SK-N-SH (cell line): ENCODE measurements at regions of chr6 and their contacts with region 1.

Region 1: GRCh38 chr6:79777713-79778579 is 146.8 kb downstream of the SH3BGRL2 start:
- DNase-seq: peak; percentile 92
- H3K4me3 ChIP-seq: peak overlapping the region; percentile 34 to 44
- H3K27ac ChIP-seq: peak overlapping the region in 1 of 2 experiments; percentile 51; a peak in 2 of 4 replicates
- H3K4me1 ChIP-seq: peaks cover 0 to 9% of the 10 kb centered on the region in 2 experiments; a peak in 2 of 4 replicates
- H3K27me3 ChIP-seq: no peaks in the 10 kb centered on the region
- CTCF ChIP-seq: peak; percentile 94
- EP300 ChIP-seq: no peak
- RAD21 ChIP-seq: peak; percentile 89

Region 2: DNA sequence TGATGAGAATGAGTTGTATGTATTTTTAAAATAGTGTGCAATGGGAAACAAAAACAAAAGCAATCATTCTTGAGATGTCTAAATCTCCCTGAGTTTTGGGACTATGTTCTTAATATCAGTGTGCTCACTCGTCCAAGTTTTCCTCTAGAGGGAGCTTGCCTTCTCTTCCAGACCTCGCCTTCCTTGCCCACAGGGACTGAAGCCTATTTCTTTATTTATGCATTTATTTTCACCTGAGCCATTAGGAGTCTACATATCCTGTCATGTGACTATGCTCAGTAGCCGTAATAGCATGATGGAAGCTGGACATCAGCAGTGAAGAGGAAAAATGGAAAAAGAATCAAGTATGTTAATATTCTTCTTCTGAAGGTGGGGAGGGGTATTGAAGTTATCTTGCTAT is 15.6 kb before region 1 on chr6:
- CTCF ChIA-PET with region 1: interaction called, 12 read pairs
- POLR2A ChIA-PET with region 1: no interaction called
- DNase-seq: no peak
- H3K4me3 ChIP-seq: no peak overlapping the region
- H3K27ac ChIP-seq: no peak overlapping the region
- H3K4me1 ChIP-seq: no peaks in the 10 kb centered on the region; a peak in 1 of 4 replicates
- H3K27me3 ChIP-seq: no peaks in the 10 kb centered on the region
- CTCF ChIP-seq: peak; percentile 30; the same call in 1 of the 2 replicates
- EP300 ChIP-seq: no peak
- RAD21 ChIP-seq: peak; percentile 56

Region 3: GRCh38 chr6:79802657-79803300 is 24.8 kb after region 1 on chr6:
- CTCF ChIA-PET with region 1: interaction called, 116 read pairs
- POLR2A ChIA-PET with region 1: no interaction called
- DNase-seq: no peak
- H3K4me3 ChIP-seq: no peak overlapping the region
- H3K27ac ChIP-seq: peak overlapping the region in 1 of 2 experiments; percentile 62; a peak in 2 of 4 replicates
- H3K4me1 ChIP-seq: peaks cover 0 to 18% of the 10 kb centered on the region in 2 experiments; a peak in 2 of 4 replicates
- H3K27me3 ChIP-seq: no peaks in the 10 kb centered on the region
- CTCF ChIP-seq: no peak
- EP300 ChIP-seq: no peak
- RAD21 ChIP-seq: no peak

Region 4: GRCh38 chr6:79821859-79822258 is 43.9 kb after region 1 on chr6:
- CTCF ChIA-PET with region 1: interaction called, 12 read pairs
- POLR2A ChIA-PET with region 1: no interaction called
- DNase-seq: no peak
- H3K4me3 ChIP-seq: no peak overlapping the region
- H3K27ac ChIP-seq: peak overlapping the region in 1 of 2 experiments; percentile 30; a peak in 1 of 4 replicates
- H3K4me1 ChIP-seq: no peaks in the 10 kb centered on the region; a peak in 2 of 4 replicates
- H3K27me3 ChIP-seq: peaks cover 4% of the 10 kb centered on the region; the same call in 1 of the 2 replicates
- CTCF ChIP-seq: no peak
- EP300 ChIP-seq: no peak
- RAD21 ChIP-seq: no peak